ENCODE measurements at regions of chr22 and their contacts with region 1.

Region 1: DNA sequence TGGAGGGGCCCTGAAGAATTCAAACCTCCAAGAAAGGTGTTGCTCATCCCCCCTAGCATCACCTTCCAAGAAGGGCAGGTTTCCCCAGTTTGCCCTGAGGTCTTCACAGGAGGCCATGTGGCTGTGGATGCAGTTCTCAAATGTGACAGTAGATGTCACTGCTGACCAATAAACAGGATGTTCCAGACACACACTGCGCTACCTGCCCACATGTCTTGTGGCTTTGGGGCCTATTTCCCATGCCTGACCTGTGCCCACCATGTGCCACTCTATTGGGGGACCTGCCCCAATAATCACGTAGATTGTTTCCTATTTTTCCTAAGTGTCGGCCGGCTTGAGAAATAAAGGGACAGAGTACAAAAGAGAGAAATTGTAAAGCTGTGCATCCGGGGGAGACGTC is 4.5 kb downstream of the GSTT2 start:
- DNase-seq: peak; percentile 90
- H3K4me3 Mint-ChIP-seq: no peak overlapping the region
- H3K27ac Mint-ChIP-seq: no peak overlapping the region
- H3K4me1 Mint-ChIP-seq: peaks cover 9% of the 10 kb centered on the region
- H3K27me3 Mint-ChIP-seq: peaks cover 2% of the 10 kb centered on the region

Region 2: GRCh38 chr22:24525416-24526037 is 541.1 kb after region 1 on chr22:
- intact Hi-C with region 1: loop called (anchors 10 kb)
- DNase-seq: peak; percentile 95
- H3K4me3 Mint-ChIP-seq: no peak overlapping the region
- H3K27ac Mint-ChIP-seq: no peak overlapping the region
- H3K4me1 Mint-ChIP-seq: peaks cover 15% of the 10 kb centered on the region
- H3K27me3 Mint-ChIP-seq: peaks cover 5% of the 10 kb centered on the region